ENCODE measurements at regions of chr13 and their contacts with region 1.

Region 1: DNA sequence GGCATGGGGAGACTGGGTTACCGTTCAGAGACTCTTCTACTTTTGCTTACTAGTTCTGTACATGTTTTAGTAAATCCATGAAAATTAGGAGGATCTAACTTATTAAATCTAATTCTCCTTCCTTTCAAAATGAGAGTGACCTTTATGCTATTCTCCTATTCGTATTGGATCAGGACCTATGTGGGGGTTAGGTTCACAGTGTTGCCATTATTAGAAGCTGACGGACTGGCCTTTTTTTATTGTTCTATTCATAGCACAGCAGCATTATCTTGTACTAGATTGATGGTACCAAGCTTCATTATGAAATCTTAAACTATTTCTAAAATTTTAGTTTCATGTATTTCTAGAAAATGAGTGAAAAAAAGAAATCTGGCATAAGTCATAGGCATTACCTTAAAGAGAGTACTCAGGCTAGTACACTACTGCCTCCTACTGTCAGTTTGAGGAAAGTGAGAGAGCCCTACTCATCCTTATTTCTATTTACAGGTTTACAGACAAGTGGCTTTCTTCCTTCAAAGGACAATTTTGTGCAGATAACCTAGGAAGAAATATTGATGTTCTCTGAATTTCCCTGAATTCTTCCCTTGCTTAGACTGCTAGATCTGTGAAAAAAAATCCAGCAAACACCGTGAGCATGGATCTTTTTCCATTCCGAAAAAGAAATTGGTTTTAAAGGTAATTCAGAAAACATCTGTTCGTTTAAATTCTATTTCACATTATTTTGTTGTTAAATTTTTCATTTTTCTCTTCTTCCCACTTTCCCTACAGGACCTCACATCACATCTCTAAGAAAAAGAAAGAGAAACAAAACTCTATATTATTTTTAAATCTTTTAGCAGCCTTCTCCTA is 485.5 kb downstream of the DIAPH3 start:
- DNase-seq: no peak
- H3K4me3 ChIP-seq: no peak overlapping the region
- H3K27ac ChIP-seq: no peak overlapping the region
- H3K4me1 ChIP-seq: no peaks in the 10 kb centered on the region
- H3K27me3 ChIP-seq: no peaks in the 10 kb centered on the region
- CTCF ChIP-seq: peak in 3 of 4 experiments; percentile 39 to 58 (median 57)
- POLR2A ChIP-seq: no peak

Region 2: DNA sequence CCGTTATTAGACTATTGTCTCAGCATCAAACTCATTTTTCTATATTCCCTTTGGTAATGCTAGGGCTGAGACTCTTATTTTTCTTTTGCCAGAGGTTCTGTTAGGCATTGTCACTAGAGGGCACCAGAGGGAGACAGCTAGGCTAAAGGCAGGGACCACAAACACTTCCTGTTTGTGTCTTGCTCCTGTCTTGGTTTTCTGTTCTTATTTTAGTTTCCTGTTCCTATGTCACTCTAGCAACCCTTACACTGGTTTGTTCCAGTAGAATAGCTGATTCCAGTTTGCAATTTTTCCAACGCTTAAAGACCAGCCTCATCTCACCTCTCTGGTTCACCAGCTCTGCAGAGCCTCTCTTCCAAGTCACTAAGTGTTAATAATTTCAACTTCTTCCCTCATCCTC is 286.5 kb before region 1 on chr13:
- intact Hi-C with region 1: loop called (anchors 2 kb)
- DNase-seq: no peak
- H3K4me3 ChIP-seq: no peak overlapping the region
- H3K27ac ChIP-seq: no peak overlapping the region
- H3K4me1 ChIP-seq: no peaks in the 10 kb centered on the region
- H3K27me3 ChIP-seq: no peaks in the 10 kb centered on the region
- CTCF ChIP-seq: peak in 3 of 4 experiments; percentile 37 to 56 (median 50)
- POLR2A ChIP-seq: no peak

Region 3: GRCh38 chr13:59547950-59548349 is 130.2 kb before region 1 on chr13:
- intact Hi-C with region 1: no loop called
- DNase-seq: no peak
- H3K4me3 ChIP-seq: no peak overlapping the region
- H3K27ac ChIP-seq: no peak overlapping the region
- H3K4me1 ChIP-seq: no peaks in the 10 kb centered on the region
- H3K27me3 ChIP-seq: no peaks in the 10 kb centered on the region
- CTCF ChIP-seq: no peak
- POLR2A ChIP-seq: no peak

Region 4: DNA sequence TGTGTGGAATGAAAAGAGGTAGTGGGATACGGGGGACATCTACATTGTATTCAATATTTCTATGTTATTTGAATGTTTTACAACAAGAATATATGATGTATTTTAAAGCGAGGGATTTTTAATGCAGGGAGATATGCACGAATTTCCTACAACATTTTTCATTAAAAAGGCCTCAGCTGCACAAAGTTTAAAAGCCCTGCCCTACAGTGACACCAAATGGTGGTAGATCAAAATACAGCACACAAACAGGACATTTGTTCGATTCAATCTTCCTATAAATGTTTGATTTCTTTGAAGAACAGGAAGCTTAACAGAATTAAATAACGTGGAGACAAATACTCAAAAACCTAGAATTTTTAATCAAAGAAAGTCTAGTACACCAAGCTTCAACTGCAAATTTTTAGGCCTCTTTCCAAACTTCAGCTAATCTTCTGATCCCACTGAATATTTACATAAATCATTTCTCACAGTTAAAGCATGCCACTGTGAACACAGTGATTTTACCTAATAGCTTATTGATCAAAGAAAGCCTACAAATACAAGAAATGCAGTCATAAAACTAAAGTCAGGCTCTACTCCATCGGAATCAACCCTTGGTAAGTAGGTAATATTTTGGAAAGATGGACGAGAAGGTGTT is 228.3 kb after region 1 on chr13:
- intact Hi-C with region 1: loop called (anchors 5 kb)
- DNase-seq: no peak
- H3K4me3 ChIP-seq: no peak overlapping the region
- H3K27ac ChIP-seq: no peak overlapping the region
- H3K4me1 ChIP-seq: no peaks in the 10 kb centered on the region
- H3K27me3 ChIP-seq: no peaks in the 10 kb centered on the region
- CTCF ChIP-seq: peak in 3 of 4 experiments; percentile 10 to 39 (median 30)
- POLR2A ChIP-seq: no peak